CD4-positive, alpha-beta memory T cell (primary cell): ENCODE measurements at regions of chr14 and their contacts with region 1.

Region 1: DNA sequence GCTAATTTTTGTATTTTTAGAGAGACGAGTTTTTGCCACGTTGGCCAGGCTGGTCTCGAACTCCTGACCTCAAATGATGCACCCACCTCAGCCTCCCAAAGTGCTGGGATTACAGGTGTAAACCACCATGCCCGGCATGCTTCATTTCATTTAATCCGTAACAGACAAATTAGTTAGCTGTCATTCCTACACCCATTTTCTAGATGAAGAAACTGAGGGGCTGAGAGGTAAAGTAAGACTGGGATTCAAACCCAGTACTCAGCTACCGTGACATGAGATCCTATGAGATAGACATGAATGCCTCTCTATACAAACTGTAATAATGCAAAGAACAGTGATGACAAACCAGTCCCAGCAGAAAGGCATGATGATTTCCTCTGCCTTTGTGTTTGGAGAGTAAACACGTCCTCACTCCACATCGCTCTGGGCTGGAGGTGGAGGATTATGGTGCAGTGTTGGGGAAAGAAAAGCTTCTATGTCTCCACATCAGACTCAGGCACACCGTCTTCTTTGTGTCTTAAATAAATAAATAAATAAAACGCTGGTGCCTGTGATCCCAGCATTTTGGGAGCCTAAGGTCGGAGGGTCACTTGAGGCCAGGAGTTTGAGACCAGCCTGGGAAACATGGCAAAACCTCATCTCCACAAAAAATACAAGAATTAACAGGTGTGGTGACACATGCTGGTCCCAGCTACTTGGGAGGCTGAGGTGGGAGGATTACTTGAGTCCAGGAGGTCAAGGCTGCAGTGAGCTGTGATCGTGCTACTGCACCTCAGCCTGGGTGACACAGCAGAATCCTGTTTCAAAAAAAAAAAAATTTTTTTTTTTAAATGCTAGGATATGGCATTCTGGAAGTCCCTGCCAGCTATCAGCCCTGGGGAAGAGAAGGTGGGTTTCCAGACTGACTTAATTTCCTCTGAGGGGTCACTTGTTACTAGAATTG is 10.5 kb downstream of the VSX2 start:
- DNase-seq: no peak
- H3K4me3 ChIP-seq: no peak overlapping the region
- H3K4me3 Mint-ChIP-seq: peak overlapping the region in 1 of 8 donors; percentile 24
- H3K27ac ChIP-seq: no peak overlapping the region
- H3K27ac Mint-ChIP-seq: no peak overlapping the region
- H3K4me1 ChIP-seq: peaks cover 8% of the 10 kb centered on the region
- H3K4me1 Mint-ChIP-seq: peaks cover 4 to 7% (median 6%) of the 10 kb centered on the region in 4 donors
- H3K27me3 ChIP-seq: peaks cover 12% of the 10 kb centered on the region
- H3K27me3 Mint-ChIP-seq: peaks cover 22 to 39% of the 10 kb centered on the region in 2 donors

Region 2: GRCh38 chr14:74109369-74109768 is 140.3 kb before region 1 on chr14:
- CTCF ChIA-PET with region 1: interaction called, 9 read pairs
- POLR2A ChIA-PET with region 1: no interaction called
- intact Hi-C with region 1: loop called (anchors 1 kb)
- DNase-seq: no peak
- H3K4me3 ChIP-seq: no peak overlapping the region
- H3K4me3 Mint-ChIP-seq: no peak overlapping the region
- H3K27ac ChIP-seq: no peak overlapping the region
- H3K27ac Mint-ChIP-seq: no peak overlapping the region
- H3K4me1 ChIP-seq: no peaks in the 10 kb centered on the region
- H3K4me1 Mint-ChIP-seq: no peaks in the 10 kb centered on the region
- H3K27me3 ChIP-seq: no peaks in the 10 kb centered on the region
- H3K27me3 Mint-ChIP-seq: no peaks in the 10 kb centered on the region

Region 3: DNA sequence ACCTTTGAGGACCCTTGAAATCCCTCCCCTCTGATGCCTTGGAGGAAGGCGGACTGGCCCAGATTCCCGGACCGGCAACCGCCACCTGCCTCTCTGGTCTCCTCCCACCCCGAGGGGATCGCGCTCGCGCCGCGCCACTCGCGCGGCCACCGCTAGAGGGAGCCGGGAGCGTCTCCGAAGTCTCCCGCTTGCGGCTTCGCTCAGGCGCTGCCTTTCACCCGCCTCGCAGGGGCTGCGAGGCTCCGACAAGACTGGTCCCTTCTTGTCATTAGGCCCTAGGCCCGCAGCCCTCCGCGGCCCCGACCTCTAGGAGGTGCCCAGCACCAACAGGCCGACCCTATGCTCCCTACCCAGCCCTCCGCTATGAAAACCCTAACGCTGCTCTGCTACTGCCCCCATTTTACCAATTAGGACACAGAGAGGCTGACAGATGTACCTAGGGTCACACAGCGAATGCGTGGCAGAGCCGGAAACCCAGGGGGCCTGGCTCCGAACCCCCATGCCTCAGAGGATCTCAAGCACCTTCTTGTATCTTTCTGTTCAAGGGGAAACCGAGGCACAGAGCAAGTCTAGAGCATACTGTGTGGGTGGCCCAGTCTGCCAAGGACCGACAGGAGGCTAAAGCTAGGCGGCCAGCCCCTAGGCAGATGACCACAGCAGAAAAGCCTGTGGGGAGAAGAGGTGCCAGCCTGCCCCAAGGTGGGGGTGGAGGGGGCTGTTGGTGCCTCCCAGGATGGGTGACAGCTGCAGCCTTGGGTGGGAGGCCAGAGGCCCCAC is 31.8 kb before region 1 on chr14:
- CTCF ChIA-PET with region 1: interaction called, 8 read pairs
- POLR2A ChIA-PET with region 1: no interaction called
- intact Hi-C with region 1: loop called (anchors 1 kb)
- DNase-seq: peak; percentile 57 to 64 (median 60)
- H3K4me3 ChIP-seq: no peak overlapping the region
- H3K4me3 Mint-ChIP-seq: peak overlapping the region; percentile 21 to 73 (median 50)
- H3K27ac ChIP-seq: no peak overlapping the region
- H3K27ac Mint-ChIP-seq: no peak overlapping the region
- H3K4me1 ChIP-seq: peaks cover 7% of the 10 kb centered on the region
- H3K4me1 Mint-ChIP-seq: peaks cover 0 to 5% (median 3%) of the 10 kb centered on the region in 4 donors
- H3K27me3 ChIP-seq: peaks cover 6% of the 10 kb centered on the region
- H3K27me3 Mint-ChIP-seq: peaks cover 0 to 25% of the 10 kb centered on the region in 2 donors